ENCODE measurements at regions of chr2 and their contacts with region 1.

Region 1: GRCh38 chr2:8681786-8682692 is at the start of gene ID2:
- DNase-seq: peak; percentile 96 to 99 (median 98)
- ATAC-seq: peak; percentile 68 to 77
- H3K4me3 Mint-ChIP-seq: peak within 1 kb of the TSS; percentile 92 to 100 (median 99)
- H3K27ac Mint-ChIP-seq: peak within 1 kb of the TSS; percentile 88 to 99 (median 97)
- H3K4me1 Mint-ChIP-seq: peaks cover 19 to 58% (median 47%) of the 10 kb centered on the region in 4 donors
- H3K27me3 Mint-ChIP-seq: peaks cover 9 to 22% (median 11%) of the 10 kb centered on the region in 5 donors
- polyA plus RNA-seq, gene ID2: 368 to 630 (median 479) TPM

Region 2: DNA sequence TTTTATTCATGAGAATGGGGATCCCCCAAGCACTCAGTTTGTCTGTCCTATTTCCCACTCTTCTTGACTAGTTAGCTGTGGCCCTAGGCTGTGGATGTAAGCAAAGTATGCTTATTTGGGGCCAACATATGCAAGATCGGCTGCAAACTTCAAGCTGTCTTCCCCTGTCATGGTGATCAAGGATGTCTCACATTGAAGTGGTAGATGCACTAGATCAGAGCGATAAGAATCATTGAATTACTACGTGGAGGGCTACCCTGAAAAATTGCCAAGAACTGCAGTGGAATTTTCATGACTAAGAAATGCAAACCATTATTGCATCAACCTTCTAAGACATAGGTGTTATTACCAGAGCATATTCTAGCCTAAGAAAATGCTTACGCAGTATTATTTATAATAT is 1237.4 kb before region 1 on chr2:
- POLR2A ChIA-PET with region 1: interaction called, 24 read pairs
- DNase-seq: no peak
- ATAC-seq: peak; percentile 36 to 45
- H3K4me3 Mint-ChIP-seq: peak overlapping the region in 6 of 10 donors; percentile 11 to 66 (median 28)
- H3K27ac Mint-ChIP-seq: peak overlapping the region in 8 of 10 donors; percentile 7 to 92 (median 61)
- H3K4me1 Mint-ChIP-seq: peaks cover 30 to 75% (median 67%) of the 10 kb centered on the region in 4 donors
- H3K27me3 Mint-ChIP-seq: no peaks in the 10 kb centered on the region

Region 3: GRCh38 chr2:7567646-7568045 is 1114.4 kb before region 1 on chr2:
- POLR2A ChIA-PET with region 1: interaction called, 27 read pairs
- DNase-seq: peak; percentile 36 to 93 (median 75)
- ATAC-seq: peak; percentile 93 to 94
- H3K4me3 Mint-ChIP-seq: peak overlapping the region; percentile 34 to 75 (median 66)
- H3K27ac Mint-ChIP-seq: peak overlapping the region; percentile 90 to 99 (median 94)
- H3K4me1 Mint-ChIP-seq: peaks cover 34 to 74% (median 64%) of the 10 kb centered on the region in 4 donors
- H3K27me3 Mint-ChIP-seq: no peaks in the 10 kb centered on the region

Region 4: GRCh38 chr2:7730449-7730848 is 951.6 kb before region 1 on chr2:
- POLR2A ChIA-PET with region 1: interaction called, 31 read pairs
- DNase-seq: peak in 2 of 10 donors; percentile 18 to 41
- ATAC-seq: peak; percentile 31 to 51
- H3K4me3 Mint-ChIP-seq: peak overlapping the region; percentile 58 to 92 (median 84)
- H3K27ac Mint-ChIP-seq: peak overlapping the region; percentile 88 to 99 (median 96)
- H3K4me1 Mint-ChIP-seq: peaks cover 21 to 64% (median 52%) of the 10 kb centered on the region in 4 donors
- H3K27me3 Mint-ChIP-seq: no peaks in the 10 kb centered on the region

Region 5: GRCh38 chr2:8669157-8669817 is 12.8 kb before region 1 on chr2:
- POLR2A ChIA-PET with region 1: interaction called, 43 read pairs
- DNase-seq: no peak
- ATAC-seq: no peak
- H3K4me3 Mint-ChIP-seq: no peak overlapping the region
- H3K27ac Mint-ChIP-seq: no peak overlapping the region
- H3K4me1 Mint-ChIP-seq: peaks cover 9 to 13% (median 13%) of the 10 kb centered on the region in 4 donors
- H3K27me3 Mint-ChIP-seq: peaks cover 0 to 8% (median 0%) of the 10 kb centered on the region in 5 donors

Region 6: DNA sequence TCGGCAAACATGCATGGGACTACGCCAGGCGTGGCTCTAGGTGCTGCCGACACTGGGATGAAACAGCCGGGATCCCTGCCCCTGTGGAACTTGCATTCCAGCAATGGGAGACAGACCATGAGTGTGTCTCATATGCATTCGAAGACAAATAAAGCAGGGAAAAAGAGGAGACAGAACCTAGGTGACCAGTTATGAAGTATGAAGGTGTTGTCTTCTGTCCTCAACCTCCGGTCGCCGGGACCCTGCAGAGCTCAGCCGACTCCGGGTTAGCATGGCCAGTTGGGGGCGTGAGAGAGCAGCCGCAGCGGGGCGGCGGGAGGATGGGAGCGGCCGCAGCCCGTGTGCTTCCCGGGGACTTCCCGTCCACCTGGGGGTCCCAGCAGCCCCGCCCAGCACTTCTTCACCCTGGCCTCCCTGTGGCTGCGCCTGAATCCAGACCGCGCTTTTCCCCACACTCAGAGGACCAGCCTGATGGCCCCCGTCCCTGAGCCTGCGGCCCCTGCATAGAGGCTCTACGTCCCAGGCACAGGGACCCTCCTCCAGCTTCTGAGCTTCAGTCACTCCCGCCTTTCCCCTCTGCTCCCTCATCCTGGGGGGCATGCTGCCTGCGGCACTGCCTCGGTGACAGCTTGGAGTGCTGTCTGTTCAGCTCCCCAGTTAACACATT is 11.2 kb after region 1 on chr2:
- POLR2A ChIA-PET with region 1: no interaction called
- DNase-seq: peak in 4 of 10 donors; percentile 28 to 35 (median 32)
- ATAC-seq: peak; percentile 63 to 70
- H3K4me3 Mint-ChIP-seq: peak overlapping the region in 7 of 10 donors; percentile 15 to 65 (median 33)
- H3K27ac Mint-ChIP-seq: no peak overlapping the region
- H3K4me1 Mint-ChIP-seq: peaks cover 2 to 10% (median 7%) of the 10 kb centered on the region in 4 donors
- H3K27me3 Mint-ChIP-seq: peaks cover 10 to 26% (median 23%) of the 10 kb centered on the region in 5 donors

Region 7: GRCh38 chr2:8704906-8705305 is 22.9 kb after region 1 on chr2:
- POLR2A ChIA-PET with region 1: no interaction called
- DNase-seq: no peak
- ATAC-seq: no peak
- H3K4me3 Mint-ChIP-seq: no peak overlapping the region
- H3K27ac Mint-ChIP-seq: no peak overlapping the region
- H3K4me1 Mint-ChIP-seq: no peaks in the 10 kb centered on the region
- H3K27me3 Mint-ChIP-seq: peaks cover 0 to 8% (median 6%) of the 10 kb centered on the region in 5 donors

Measured in naive thymus-derived CD8-positive, alpha-beta T cell (primary cell).